Naive thymus-derived CD4-positive, alpha-beta T cell (primary cell): ENCODE measurements at regions of chr12 and their contacts with region 1.

Region 1: DNA sequence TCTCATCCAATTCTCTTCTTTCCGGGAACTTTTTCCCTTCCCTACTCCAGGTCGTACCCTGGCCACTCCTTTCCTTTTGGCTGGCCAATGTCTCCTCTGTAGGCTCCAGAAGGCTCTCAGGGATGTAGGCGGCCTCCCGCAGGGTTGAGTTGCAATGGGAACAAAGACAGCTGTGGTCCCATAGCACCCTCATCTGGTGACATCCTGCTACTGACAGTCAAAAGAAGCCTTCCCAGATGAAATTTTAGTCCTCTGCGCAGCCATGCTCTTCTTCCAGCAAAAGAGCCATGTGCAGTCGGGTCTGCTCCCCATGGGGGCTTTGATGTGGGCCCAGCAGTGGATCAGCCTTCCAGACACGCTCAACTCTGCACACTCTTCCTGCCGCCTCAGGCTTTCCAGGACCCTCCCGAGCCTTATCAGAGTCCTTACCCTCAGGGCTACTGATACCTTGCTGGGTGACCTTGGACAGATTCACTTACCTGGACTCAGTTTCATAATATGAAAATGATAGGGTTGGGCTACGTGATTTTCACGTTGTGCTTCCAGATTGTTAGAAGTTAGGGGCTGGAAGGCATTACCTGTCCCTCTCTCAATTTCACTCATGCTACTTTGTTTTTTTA is 5.5 kb upstream of the CELA1 start:
- DNase-seq: peak; percentile 8 to 64 (median 39)
- ATAC-seq: peak; percentile 89
- H3K4me3 ChIP-seq: no peak overlapping the region
- H3K4me3 Mint-ChIP-seq: no peak overlapping the region
- H3K27ac ChIP-seq: no peak overlapping the region
- H3K27ac Mint-ChIP-seq: peak overlapping the region in 4 of 9 donors; percentile 7 to 65 (median 22)
- H3K4me1 ChIP-seq: no peaks in the 10 kb centered on the region
- H3K4me1 Mint-ChIP-seq: peaks cover 0 to 10% (median 5%) of the 10 kb centered on the region in 7 donors
- H3K27me3 ChIP-seq: no peaks in the 10 kb centered on the region
- H3K27me3 Mint-ChIP-seq: peaks cover 0 to 4% (median 0%) of the 10 kb centered on the region in 5 donors

Region 2: DNA sequence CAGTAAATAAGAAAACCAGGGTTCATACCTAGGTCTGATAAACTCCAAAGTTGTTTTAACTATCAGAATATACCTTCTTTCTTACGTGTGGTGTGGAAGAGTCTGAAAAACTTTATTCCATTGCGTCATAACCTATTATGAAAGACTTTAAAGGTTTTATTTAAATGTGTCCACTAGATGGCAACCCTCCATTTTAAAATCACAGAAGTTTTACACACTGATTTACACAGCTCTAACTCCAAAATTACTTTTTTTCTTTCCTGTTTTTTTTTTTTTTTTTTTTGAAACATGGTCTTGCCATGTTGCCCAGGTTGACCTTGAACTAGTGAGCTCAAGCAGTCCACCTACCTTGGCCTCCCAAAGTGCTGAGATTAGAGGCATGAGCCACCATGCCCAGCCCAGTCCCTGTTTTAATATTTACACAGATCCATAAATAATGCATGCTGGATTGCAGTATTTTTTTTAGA is 526.6 kb before region 1 on chr12:
- CTCF ChIA-PET with region 1: no interaction called
- POLR2A ChIA-PET with region 1: interaction called, 4 read pairs
- intact Hi-C with region 1: loop called in 1 of 2 experiments (anchors 1 kb)
- DNase-seq: peak in 7 of 9 donors; percentile 45 to 76 (median 69)
- ATAC-seq: peak; percentile 91
- H3K4me3 ChIP-seq: no peak overlapping the region
- H3K4me3 Mint-ChIP-seq: peak overlapping the region in 2 of 10 donors; percentile 34 to 77
- H3K27ac ChIP-seq: peak overlapping the region; percentile 73
- H3K27ac Mint-ChIP-seq: peak overlapping the region; percentile 56 to 99 (median 91)
- H3K4me1 ChIP-seq: peaks cover 0 to 4% of the 10 kb centered on the region in 2 donors
- H3K4me1 Mint-ChIP-seq: peaks cover 0 to 9% (median 6%) of the 10 kb centered on the region in 7 donors
- H3K27me3 ChIP-seq: no peaks in the 10 kb centered on the region
- H3K27me3 Mint-ChIP-seq: no peaks in the 10 kb centered on the region